Prostate gland (tissue), 2 donors: ENCODE measurements at regions of chr2 and their contacts with region 1.

Region 1: GRCh38 chr2:33583194-33583938 is 15.7 kb downstream of the FAM98A start:
- DNase-seq: no peak
- H3K4me3 ChIP-seq: no peak overlapping the region
- H3K27ac ChIP-seq: no peak overlapping the region
- H3K4me1 ChIP-seq: no peaks in the 10 kb centered on the region
- H3K27me3 ChIP-seq: no peaks in the 10 kb centered on the region
- CTCF ChIP-seq: peak; percentile 51 to 83 (median 67)
- POLR2A ChIP-seq: no peak

Region 2: DNA sequence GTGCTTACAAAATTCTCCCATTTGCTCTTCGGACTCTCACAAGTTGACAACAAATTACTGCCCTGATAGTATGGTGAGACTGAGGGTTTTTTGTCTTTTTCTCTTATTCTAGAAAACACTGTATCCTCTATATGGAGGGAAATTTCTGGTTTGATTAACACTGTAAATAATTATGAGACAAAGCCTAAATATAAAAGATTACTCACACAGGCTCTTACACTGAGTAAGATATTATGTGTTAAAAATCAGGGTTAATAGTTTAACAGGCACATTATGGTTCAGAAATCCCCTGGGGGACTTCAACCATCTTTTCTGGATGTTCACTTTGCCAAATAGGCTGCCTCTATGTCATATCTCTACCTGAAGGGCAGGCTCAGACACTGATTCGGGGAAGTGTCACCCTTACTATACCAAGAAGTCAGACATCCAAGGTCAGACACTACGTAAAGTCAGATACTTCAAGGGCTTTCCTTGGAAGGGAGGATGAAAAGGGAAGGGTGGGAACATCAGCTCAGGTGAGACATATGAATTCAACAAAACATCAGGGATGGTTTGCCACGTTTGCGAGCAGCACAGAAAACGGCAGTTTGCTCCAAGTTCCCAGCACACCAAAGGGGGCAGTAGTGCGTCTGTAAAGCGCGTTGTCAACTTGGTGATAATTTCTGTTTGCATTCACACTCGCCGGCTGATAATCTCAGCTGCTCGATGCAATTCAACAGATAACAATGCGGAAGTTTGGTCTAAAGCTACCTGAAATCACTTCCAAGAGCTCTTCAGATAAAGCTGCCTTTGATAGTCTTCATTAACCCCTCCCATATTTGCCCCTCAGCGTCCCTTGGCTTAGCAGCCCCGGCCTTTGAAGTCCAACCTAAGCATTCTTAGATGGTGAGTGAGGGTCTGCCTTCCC is 107.9 kb before region 1 on chr2:
- intact Hi-C with region 1: loop called (anchors 5 kb)
- DNase-seq: peak; percentile 76
- H3K4me3 ChIP-seq: peak overlapping the region; percentile 42 to 50
- H3K27ac ChIP-seq: peak overlapping the region; percentile 74 to 78
- H3K4me1 ChIP-seq: peaks cover 5% of the 10 kb centered on the region
- H3K27me3 ChIP-seq: no peaks in the 10 kb centered on the region
- CTCF ChIP-seq: peak; percentile 38 to 73 (median 61)
- POLR2A ChIP-seq: no peak

Region 3: GRCh38 chr2:33660426-33661118 is 77.2 kb after region 1 on chr2:
- intact Hi-C with region 1: no loop called
- DNase-seq: no peak
- H3K4me3 ChIP-seq: no peak overlapping the region
- H3K27ac ChIP-seq: no peak overlapping the region
- H3K4me1 ChIP-seq: no peaks in the 10 kb centered on the region
- H3K27me3 ChIP-seq: no peaks in the 10 kb centered on the region
- CTCF ChIP-seq: no peak
- POLR2A ChIP-seq: no peak